ENCODE measurements at regions of chr13 and their contacts with region 1.

Region 1: DNA sequence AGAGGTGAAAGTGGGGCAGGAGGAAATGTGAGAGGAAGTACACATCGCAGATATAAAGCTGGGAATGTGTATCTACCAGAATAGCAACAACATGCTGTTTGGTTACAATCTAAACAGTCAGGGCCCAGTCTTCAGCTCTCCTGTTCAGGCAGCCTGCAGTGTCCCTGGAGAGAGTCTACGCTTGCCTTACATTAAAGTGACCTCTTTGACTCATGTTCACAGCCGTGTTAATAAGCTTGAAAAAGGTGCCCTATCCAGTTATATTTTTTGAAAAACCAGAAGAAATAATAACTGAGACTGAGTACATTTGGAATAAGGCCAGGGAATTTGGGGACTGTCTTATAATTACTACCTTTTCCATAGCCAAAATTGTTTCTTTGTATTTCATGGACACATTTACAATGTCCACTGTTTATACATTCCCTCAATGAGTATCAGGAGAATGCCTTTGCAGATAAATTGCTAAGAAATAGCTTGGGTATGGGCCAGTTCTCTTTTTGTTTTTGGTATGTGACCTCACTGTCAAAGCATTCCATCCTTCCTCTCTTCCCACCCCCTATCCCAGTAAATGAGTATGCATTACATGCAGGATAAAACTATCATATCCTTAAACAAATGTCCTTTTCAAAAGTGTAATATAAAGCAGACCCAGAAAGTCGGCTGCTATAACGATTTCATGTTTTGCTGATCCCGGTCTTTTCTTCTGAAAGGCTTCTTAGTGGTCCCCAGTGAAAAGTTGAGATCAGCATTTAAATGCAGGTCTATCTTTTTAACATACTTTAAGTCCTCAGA is 82.6 kb downstream of the PCDH9 start:
- DNase-seq: peak; percentile 64
- H3K4me3 ChIP-seq: peak overlapping the region in 1 of 3 experiments; percentile 48
- H3K27ac ChIP-seq: peak overlapping the region; percentile 96
- H3K4me1 ChIP-seq: peaks cover 40% of the 10 kb centered on the region
- H3K27me3 ChIP-seq: no peaks in the 10 kb centered on the region
- CTCF ChIP-seq: no peak
- POLR2A ChIP-seq: no peak

Region 2: GRCh38 chr13:65913173-65913572 is 1234.4 kb before region 1 on chr13:
- CTCF ChIA-PET with region 1: no interaction called
- POLR2A ChIA-PET with region 1: no interaction called
- dilution Hi-C with region 1: no loop called
- intact Hi-C with region 1: loop called (anchors 2 kb)
- DNase-seq: peak; percentile 94
- H3K4me3 ChIP-seq: peak overlapping the region in 1 of 3 experiments; percentile 31
- H3K27ac ChIP-seq: peak overlapping the region; percentile 99
- H3K4me1 ChIP-seq: peaks cover 38% of the 10 kb centered on the region
- H3K27me3 ChIP-seq: no peaks in the 10 kb centered on the region
- CTCF ChIP-seq: no peak
- POLR2A ChIP-seq: peak; percentile 54

Region 3: DNA sequence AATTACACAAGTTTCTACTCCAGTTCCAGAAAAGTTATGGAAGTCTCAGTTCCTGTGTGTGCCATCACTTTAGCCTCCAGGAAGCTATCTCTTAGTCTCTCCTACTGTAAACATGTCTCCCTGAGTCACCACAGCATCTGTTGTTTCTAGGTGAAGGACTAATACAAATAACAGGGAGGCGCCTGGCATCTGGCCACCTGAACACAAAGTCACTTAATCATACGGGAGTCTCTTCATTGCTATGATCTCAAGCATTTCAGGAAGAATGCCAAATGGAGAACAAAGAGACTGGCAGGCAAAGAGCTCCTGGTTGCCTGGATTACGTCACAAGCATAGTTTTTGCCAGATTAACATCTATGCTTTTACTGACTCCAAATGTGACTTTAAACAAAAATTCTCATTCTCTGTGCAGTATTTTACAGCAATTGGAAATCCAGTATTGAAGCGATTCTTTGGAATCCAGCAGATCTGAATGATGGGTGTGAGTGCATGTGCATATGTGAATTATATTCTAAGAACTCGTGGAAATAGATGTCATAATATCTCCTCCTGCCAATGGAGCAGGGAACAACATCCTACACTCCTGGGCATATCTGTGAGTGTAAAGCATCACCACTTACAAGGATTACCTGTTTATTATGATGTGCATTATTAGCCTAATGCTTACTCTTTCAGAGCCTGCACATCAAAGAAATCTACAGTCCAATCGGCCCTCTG is 490.2 kb before region 1 on chr13:
- CTCF ChIA-PET with region 1: no interaction called
- POLR2A ChIA-PET with region 1: no interaction called
- dilution Hi-C with region 1: no loop called
- intact Hi-C with region 1: loop called (anchors 1 kb)
- DNase-seq: peak; percentile 97
- H3K4me3 ChIP-seq: no peak overlapping the region
- H3K27ac ChIP-seq: peak overlapping the region; percentile 92
- H3K4me1 ChIP-seq: peaks cover 32% of the 10 kb centered on the region
- H3K27me3 ChIP-seq: no peaks in the 10 kb centered on the region
- CTCF ChIP-seq: no peak
- POLR2A ChIP-seq: peak; percentile 31

Region 4: DNA sequence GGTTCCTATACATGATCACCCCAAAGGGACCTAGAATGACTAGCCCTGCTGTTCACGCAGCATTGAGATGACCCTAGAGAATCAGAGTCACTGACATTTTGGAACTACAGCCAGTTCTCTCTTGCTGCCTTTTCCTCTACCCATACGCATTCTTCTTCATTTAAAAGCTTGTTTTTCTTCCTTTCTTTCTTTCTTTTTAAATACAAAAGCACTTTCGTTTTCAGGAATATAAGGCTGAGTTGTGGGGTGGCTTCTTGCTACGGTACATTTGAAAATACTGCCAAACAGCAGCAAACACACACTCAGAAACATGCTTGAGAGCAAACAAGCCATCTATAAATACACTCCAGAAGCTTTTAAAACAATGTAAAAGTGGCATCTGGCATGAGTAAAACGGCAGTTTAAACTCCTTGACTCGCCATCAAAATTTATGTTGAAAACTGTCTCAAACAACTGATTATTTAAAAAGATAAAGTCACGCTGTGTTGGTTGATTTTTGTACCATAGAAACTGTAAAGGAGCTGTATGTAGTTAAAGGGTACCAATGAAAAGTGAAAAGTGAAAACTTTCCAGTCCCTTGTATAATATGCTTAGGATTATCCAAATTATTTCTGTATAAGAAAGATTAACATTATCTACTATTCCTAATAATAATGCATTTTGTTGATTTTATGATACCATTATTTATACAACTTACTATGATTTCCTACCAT is 13.0 kb before region 1 on chr13:
- CTCF ChIA-PET with region 1: interaction called, 5 read pairs
- POLR2A ChIA-PET with region 1: no interaction called
- dilution Hi-C with region 1: no loop called
- intact Hi-C with region 1: loop called (anchors 1 kb)
- DNase-seq: peak; percentile 59
- H3K4me3 ChIP-seq: peak overlapping the region in 2 of 3 experiments; percentile 18 to 73
- H3K27ac ChIP-seq: peak overlapping the region; percentile 35
- H3K4me1 ChIP-seq: peaks cover 16% of the 10 kb centered on the region
- H3K27me3 ChIP-seq: no peaks in the 10 kb centered on the region
- CTCF ChIP-seq: no peak
- POLR2A ChIP-seq: no peak

Region 5: GRCh38 chr13:67230404-67231288 is 83.1 kb after region 1 on chr13:
- CTCF ChIA-PET with region 1: no interaction called
- POLR2A ChIA-PET with region 1: no interaction called
- dilution Hi-C with region 1: no loop called
- intact Hi-C with region 1: loop called (anchors 1 kb)
- DNase-seq: peak; percentile 99
- H3K4me3 ChIP-seq: peak overlapping the region; percentile 58 to 98 (median 83)
- H3K27ac ChIP-seq: peak overlapping the region; percentile 85
- H3K4me1 ChIP-seq: peaks cover 14% of the 10 kb centered on the region
- H3K27me3 ChIP-seq: no peaks in the 10 kb centered on the region
- CTCF ChIP-seq: no peak
- POLR2A ChIP-seq: no peak

Measured in endothelial cell of umbilical vein (primary cell).